Left ventricle myocardium superior (tissue), 1 donor: ENCODE measurements at regions of chr2 and their contacts with region 1.

Region 1: DNA sequence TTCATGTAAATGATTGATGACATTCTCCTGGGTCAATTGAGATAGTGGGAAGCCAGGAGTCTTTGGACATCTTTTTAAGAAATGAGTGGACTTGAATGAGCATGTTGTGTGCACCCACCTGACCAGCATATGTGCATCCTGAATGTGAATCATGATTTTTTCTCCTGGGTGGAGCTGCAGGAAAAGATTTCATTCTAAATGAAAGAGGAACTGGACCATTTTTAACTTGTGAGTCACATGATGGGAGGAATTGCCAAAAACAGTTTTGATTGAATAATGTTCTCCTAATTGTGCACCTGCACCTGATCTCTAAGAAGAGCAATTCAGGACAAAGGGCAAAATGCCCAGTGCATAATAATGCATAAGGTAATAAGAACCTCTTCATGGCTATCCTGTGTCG is 32.3 kb downstream of the COPS8 start:
- DNase-seq: no peak
- ATAC-seq: no peak

Region 2: GRCh38 chr2:237558906-237559641 is 441.0 kb after region 1 on chr2:
- intact Hi-C with region 1: loop called (anchors 10 kb)
- DNase-seq: peak; percentile 79
- ATAC-seq: peak; percentile 75